Heart left ventricle (tissue), 16 donors: ENCODE measurements at regions of chr20 and their contacts with region 1.

Region 1: GRCh38 chr20:33489495-33490022 is 337 bp upstream of the CBFA2T2 start:
- DNase-seq: peak; percentile 100
- ATAC-seq: peak; percentile 98 to 100 (median 99)
- H3K4me3 ChIP-seq: peak overlapping the region; percentile 25 to 99 (median 75)
- H3K27ac ChIP-seq: peak overlapping the region; percentile 51 to 99 (median 96)
- H3K4me1 ChIP-seq: peaks cover 2 to 27% (median 17%) of the 10 kb centered on the region in 12 donors
- H3K27me3 ChIP-seq: no peaks in the 10 kb centered on the region
- CTCF ChIP-seq: no peak
- POLR2A ChIP-seq: peak; percentile 60 to 96

Region 2: DNA sequence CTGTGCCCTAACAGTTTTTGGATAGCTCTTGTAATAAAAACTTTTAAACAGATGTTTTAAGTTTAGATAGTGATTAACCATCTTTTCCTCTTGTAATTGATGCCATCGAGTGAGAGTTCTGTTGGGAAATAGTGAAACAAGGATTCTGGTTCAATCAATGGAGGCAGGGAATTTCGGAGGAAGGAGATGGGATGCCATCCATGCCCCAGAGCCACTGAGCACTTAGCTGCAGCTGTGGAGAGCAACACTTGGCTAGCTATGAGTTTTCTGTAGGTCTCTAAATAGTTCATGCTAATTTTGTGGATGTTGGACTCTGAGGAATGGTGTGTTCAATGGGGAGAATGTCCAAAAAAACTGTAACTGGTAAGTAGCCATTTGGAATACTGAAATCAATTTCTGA is 17.0 kb after region 1 on chr20:
- intact Hi-C with region 1: no loop called
- DNase-seq: no peak
- ATAC-seq: no peak
- H3K4me3 ChIP-seq: no peak overlapping the region
- H3K27ac ChIP-seq: no peak overlapping the region
- H3K4me1 ChIP-seq: peaks cover 0 to 19% (median 9%) of the 10 kb centered on the region in 12 donors
- H3K27me3 ChIP-seq: no peaks in the 10 kb centered on the region
- CTCF ChIP-seq: no peak
- POLR2A ChIP-seq: no peak

Region 3: DNA sequence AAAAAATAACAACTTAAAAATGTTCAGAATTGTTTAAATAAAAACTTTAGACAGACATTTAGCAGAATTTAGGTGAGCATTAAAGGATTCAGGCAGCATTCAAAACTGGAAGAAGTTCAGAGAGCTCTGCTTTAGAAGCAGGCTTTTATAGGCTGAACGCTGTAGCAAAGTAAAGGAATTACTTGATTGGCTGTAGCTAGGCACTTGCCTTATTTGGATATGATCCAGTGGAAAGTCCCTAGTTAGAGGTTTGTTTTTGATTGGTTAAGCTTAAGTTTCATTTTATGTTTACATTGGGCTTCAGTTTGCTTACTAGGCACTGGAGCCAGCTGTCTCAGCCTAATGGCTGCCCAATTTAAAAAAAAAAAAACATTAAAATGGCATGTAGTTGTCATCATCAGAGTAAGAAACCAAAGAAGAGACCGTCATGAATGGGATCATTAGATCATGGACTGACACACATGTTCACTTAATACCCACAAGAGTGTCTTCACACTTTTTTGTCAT is 65.4 kb after region 1 on chr20:
- intact Hi-C with region 1: loop called in 2 of 10 experiments (anchors 2 to 5 kb)
- DNase-seq: no peak
- ATAC-seq: peak; percentile 60 to 90 (median 76)
- H3K4me3 ChIP-seq: peak overlapping the region in 3 of 12 donors; percentile 1 to 6 (median 5)
- H3K27ac ChIP-seq: peak overlapping the region in 5 of 12 donors; percentile 0 to 83 (median 44)
- H3K4me1 ChIP-seq: peaks cover 0 to 29% (median 6%) of the 10 kb centered on the region in 12 donors
- H3K27me3 ChIP-seq: no peaks in the 10 kb centered on the region
- CTCF ChIP-seq: no peak
- POLR2A ChIP-seq: no peak

Region 4: DNA sequence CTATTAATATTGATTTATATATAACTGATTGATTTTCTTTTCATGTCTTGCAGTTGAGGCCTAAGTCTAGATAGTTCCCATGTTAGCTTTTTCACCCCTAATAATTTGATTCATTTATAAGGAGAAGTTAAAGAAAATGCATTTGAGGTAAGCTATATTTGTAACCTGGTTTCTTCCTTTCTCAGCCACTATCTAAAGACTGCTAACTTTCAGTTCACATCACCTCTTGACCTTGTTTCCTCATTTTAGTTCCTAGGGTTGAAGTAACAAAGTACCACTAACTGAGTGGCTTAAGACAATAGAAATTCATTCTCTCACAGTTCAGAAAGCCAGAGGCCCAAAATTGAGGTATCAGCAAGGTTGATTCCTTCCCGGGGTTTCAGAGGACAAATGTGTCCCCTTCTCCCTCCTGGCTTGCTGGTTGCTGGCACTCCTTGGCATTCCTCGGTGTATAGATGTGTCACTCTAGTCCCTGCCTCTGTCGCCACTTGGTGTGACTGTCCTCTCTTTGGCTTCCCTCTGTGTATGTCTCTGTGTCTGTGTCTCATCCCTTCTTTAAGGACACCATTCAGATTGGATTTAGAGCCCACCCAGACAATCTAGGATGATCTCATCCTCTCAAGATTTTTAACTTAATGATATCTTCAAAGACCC is 116.7 kb after region 1 on chr20:
- intact Hi-C with region 1: loop called in 1 of 10 experiments (anchors 5 kb)
- DNase-seq: no peak
- ATAC-seq: peak in 2 of 4 donors; percentile 45 to 47
- H3K4me3 ChIP-seq: no peak overlapping the region
- H3K27ac ChIP-seq: no peak overlapping the region
- H3K4me1 ChIP-seq: peaks cover 0 to 12% (median 4%) of the 10 kb centered on the region in 12 donors
- H3K27me3 ChIP-seq: no peaks in the 10 kb centered on the region
- CTCF ChIP-seq: no peak
- POLR2A ChIP-seq: no peak